Activated CD4-positive, alpha-beta memory T cell treated with anti-CD3 and anti-CD28 coated beads, Interleukin-2, amount 10 ng/mL, durations not matched to agents 7 days and 5 days (primary cell): ENCODE measurements at regions of chr9 and their contacts with region 1.

Region 1: GRCh38 chr9:71783120-71783530 is 14.8 kb upstream of the CEMIP2 start:
- DNase-seq: peak; percentile 90
- H3K4me3 Mint-ChIP-seq: peak overlapping the region; percentile 59
- H3K27ac Mint-ChIP-seq: peak overlapping the region; percentile 98
- H3K4me1 Mint-ChIP-seq: peaks cover 46% of the 10 kb centered on the region
- H3K27me3 Mint-ChIP-seq: no peaks in the 10 kb centered on the region

Region 2: DNA sequence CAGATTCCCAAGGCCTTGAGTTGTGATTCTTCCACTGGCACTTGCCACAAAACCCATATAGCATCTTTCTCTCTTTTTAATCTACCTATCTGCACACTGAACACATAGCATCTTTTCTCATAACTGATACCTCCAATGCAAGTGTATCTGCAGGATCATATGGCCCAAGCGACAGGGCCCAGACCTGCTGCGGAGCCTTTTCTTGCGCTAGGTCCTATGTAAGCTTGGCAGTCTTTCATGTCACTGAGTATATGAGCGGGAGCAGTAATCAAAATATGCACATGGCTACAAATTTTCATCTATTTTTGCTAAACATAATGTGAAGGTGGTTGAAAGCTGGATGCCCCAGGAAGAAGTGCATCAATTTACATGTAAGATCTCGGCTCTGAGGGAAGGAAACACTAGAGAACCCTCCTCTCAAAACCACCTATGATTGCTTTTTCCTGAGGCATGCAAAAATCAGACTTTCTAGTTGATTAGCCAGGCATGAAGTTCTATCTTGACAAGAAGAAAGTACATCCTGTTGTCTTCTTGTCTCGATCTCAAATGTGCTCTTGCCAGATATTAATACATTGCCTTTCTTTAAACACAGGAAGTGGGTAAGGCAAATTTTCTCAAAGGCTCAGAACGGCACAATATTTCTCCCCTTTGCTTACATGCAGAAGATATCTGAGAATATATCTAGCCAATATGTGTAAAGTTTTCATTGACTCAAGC is 12.1 kb after region 1 on chr9:
- CTCF ChIA-PET with region 1: interaction called, 22 read pairs
- POLR2A ChIA-PET with region 1: interaction called, 75 read pairs
- DNase-seq: no peak
- H3K4me3 Mint-ChIP-seq: peak overlapping the region; percentile 56
- H3K27ac Mint-ChIP-seq: peak overlapping the region; percentile 98
- H3K4me1 Mint-ChIP-seq: peaks cover 46% of the 10 kb centered on the region
- H3K27me3 Mint-ChIP-seq: no peaks in the 10 kb centered on the region

Region 3: GRCh38 chr9:71819115-71819739 is 36.1 kb after region 1 on chr9:
- CTCF ChIA-PET with region 1: interaction called, 20 read pairs
- POLR2A ChIA-PET with region 1: interaction called, 4 read pairs
- DNase-seq: peak; percentile 36
- H3K4me3 Mint-ChIP-seq: no peak overlapping the region
- H3K27ac Mint-ChIP-seq: no peak overlapping the region
- H3K4me1 Mint-ChIP-seq: peaks cover 19% of the 10 kb centered on the region
- H3K27me3 Mint-ChIP-seq: no peaks in the 10 kb centered on the region

Region 4: DNA sequence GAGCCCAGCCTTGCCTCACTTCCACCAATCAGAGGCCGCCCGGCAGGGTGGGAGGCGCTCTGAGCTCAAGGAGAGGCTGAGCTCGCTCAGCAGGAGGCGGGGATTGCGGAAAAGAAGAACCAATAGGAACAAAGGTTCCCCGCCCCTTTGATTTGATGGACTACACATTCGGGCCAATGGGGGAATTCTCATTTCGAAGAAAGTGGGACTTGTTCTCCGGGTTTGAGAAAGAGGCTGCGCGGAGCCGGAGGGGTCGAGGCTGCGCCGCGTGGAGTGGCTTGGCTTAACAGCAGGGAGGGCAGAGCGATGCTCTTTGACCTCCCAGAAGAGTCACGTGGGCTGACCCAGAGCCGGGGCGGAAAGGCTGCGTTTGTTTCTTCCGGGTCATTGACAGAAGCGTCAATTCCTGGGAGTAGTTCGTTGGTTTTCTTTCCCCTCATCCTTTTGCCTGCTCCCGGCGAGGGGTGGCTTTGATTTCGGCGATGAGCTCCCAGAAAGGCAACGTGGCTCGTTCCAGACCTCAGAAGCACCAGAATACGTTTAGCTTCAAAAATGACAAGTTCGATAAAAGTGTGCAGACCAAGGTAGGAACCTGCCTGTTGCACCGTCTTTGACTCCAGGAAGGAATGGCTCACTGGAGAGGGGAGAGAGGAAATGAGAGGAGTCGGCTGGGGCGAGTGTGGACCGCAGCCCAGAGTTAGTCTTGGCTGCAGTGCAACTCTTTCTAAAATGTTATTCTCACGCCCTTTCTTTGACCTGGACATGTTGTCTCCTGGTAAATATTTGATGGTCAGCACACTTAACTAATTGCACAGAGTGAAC is 128.3 kb after region 1 on chr9 and contains the start of gene C9orf85:
- CTCF ChIA-PET with region 1: interaction called, 4 read pairs
- POLR2A ChIA-PET with region 1: interaction called, 21 read pairs
- DNase-seq: peak; percentile 98
- H3K4me3 Mint-ChIP-seq: peak within 1 kb of the TSS; percentile 97
- H3K27ac Mint-ChIP-seq: peak within 1 kb of the TSS; percentile 94
- H3K4me1 Mint-ChIP-seq: peaks cover 59% of the 10 kb centered on the region
- H3K27me3 Mint-ChIP-seq: no peaks in the 10 kb centered on the region
- total RNA-seq, gene C9orf85: 10.8 to 12.1 TPM